GM12878 (cell line): ENCODE measurements at regions of chr12 and their contacts with region 1.

Region 1: GRCh38 chr12:44015335-44015941 is 179.6 kb downstream of the TMEM117 start:
- DNase-seq: peak; percentile 32
- ATAC-seq: peak; percentile 87
- H3K4me3 ChIP-seq: no peak overlapping the region
- H3K27ac ChIP-seq: no peak overlapping the region
- H3K4me1 ChIP-seq: no peaks in the 10 kb centered on the region
- H3K27me3 ChIP-seq: no peaks in the 10 kb centered on the region
- CTCF ChIP-seq: peak; percentile 41 to 75 (median 61); a peak in 5 of 6 replicates
- EP300 ChIP-seq: no peak
- POLR2A ChIP-seq: no peak
- RAD21 ChIP-seq: peak; percentile 87

Region 2: DNA sequence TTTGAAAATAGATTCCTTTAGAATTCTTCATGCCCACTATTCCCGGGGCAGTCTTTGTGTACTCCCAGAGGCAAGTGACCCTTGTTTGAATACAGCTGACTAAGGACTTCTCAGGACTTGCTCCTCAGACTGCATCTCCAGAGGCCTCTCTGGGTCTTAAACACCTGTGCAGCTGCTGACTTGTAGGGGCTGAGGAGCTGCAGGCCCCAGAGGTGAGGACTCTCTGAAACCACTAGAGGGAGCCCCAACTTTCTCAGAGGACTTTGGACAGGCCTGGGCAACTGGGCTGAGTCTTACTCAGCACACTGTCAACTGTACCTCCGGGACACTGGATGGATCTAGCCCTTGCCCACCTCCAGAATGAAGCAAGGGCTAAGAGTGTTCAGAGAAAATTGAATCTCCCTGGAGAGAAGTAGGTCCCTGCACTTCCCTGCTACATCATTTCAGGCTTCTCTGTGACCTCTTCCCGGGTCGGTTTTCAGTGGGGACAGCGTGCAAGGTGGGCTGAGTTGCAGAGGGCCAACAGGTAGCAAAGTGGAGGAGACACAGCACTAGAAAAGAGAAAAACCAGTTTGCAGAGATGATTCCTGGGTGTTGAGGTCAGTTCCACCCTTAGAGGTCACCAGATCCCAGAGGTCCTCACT is 15.0 kb before region 1 on chr12:
- CTCF ChIA-PET with region 1: interaction called, 25 read pairs
- POLR2A ChIA-PET with region 1: no interaction called
- RAD21 ChIA-PET with region 1: interaction called, 6 read pairs
- SMC1A ChIA-PET with region 1: interaction called, 4 read pairs
- in situ Hi-C with region 1: no loop called
- intact Hi-C with region 1: no loop called
- DNase-seq: no peak
- ATAC-seq: peak; percentile 99
- H3K4me3 ChIP-seq: no peak overlapping the region
- H3K27ac ChIP-seq: no peak overlapping the region
- H3K4me1 ChIP-seq: no peaks in the 10 kb centered on the region
- H3K27me3 ChIP-seq: no peaks in the 10 kb centered on the region
- CTCF ChIP-seq: peak; percentile 53 to 72 (median 65)
- EP300 ChIP-seq: no peak
- POLR2A ChIP-seq: no peak
- RAD21 ChIP-seq: peak; percentile 50; the same call in 1 of the 2 replicates

Region 3: GRCh38 chr12:44476683-44477082 is 461.2 kb after region 1 on chr12:
- CTCF ChIA-PET with region 1: interaction called, 10 read pairs
- POLR2A ChIA-PET with region 1: no interaction called
- RAD21 ChIA-PET with region 1: interaction called, 5 read pairs
- SMC1A ChIA-PET with region 1: no interaction called
- in situ Hi-C with region 1: no loop called
- intact Hi-C with region 1: no loop called
- DNase-seq: no peak
- ATAC-seq: no peak
- H3K4me3 ChIP-seq: no peak overlapping the region
- H3K27ac ChIP-seq: no peak overlapping the region
- H3K4me1 ChIP-seq: no peaks in the 10 kb centered on the region
- H3K27me3 ChIP-seq: no peaks in the 10 kb centered on the region
- CTCF ChIP-seq: no peak; a peak in 1 of 6 replicates
- EP300 ChIP-seq: no peak
- POLR2A ChIP-seq: no peak
- RAD21 ChIP-seq: peak; percentile 23; the same call in 1 of the 2 replicates

Region 4: GRCh38 chr12:44765796-44766195 is 750.4 kb after region 1 on chr12:
- CTCF ChIA-PET with region 1: interaction called, 11 read pairs
- POLR2A ChIA-PET with region 1: no interaction called
- RAD21 ChIA-PET with region 1: no interaction called
- SMC1A ChIA-PET with region 1: interaction called, 4 read pairs
- in situ Hi-C with region 1: no loop called
- intact Hi-C with region 1: no loop called
- DNase-seq: no peak
- ATAC-seq: no peak
- H3K4me3 ChIP-seq: no peak overlapping the region
- H3K27ac ChIP-seq: no peak overlapping the region
- H3K4me1 ChIP-seq: no peaks in the 10 kb centered on the region
- H3K27me3 ChIP-seq: no peaks in the 10 kb centered on the region
- CTCF ChIP-seq: no peak
- EP300 ChIP-seq: no peak
- POLR2A ChIP-seq: no peak
- RAD21 ChIP-seq: no peak

Region 5: GRCh38 chr12:44930972-44931600 is 915.6 kb after region 1 on chr12:
- CTCF ChIA-PET with region 1: interaction called, 23 read pairs
- POLR2A ChIA-PET with region 1: interaction called, 3 read pairs
- RAD21 ChIA-PET with region 1: interaction called, 37 read pairs
- SMC1A ChIA-PET with region 1: interaction called, 26 read pairs
- in situ Hi-C with region 1: loop called (anchors 5 kb)
- intact Hi-C with region 1: loop called (anchors 1 kb)
- DNase-seq: no peak
- ATAC-seq: peak; percentile 66
- H3K4me3 ChIP-seq: no peak overlapping the region
- H3K27ac ChIP-seq: no peak overlapping the region
- H3K4me1 ChIP-seq: no peaks in the 10 kb centered on the region
- H3K27me3 ChIP-seq: no peaks in the 10 kb centered on the region
- CTCF ChIP-seq: peak; percentile 4 to 58 (median 38); a peak in 2 of 6 replicates
- EP300 ChIP-seq: no peak
- POLR2A ChIP-seq: no peak
- RAD21 ChIP-seq: peak; percentile 83

Region 6: DNA sequence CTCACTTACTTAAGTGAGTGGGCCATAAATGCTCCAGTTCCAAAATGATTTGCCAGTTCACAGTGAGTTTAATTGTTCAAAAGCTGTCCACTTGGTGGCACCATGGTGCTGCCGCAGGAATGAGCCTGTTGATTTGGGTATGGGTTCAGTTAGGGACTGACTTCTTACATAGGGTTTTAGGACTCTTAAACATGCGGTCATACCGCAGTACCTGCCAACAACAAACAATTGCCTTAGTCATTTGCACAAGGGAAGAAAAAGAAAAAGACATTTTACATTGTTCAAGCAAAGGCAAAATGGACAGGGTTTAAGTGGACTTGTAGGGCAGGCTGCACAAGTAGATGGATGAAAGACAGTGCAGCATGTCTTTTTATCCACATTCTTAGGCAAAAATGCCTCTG is 1115.4 kb after region 1 on chr12:
- CTCF ChIA-PET with region 1: no interaction called
- POLR2A ChIA-PET with region 1: no interaction called
- RAD21 ChIA-PET with region 1: no interaction called
- SMC1A ChIA-PET with region 1: no interaction called
- in situ Hi-C with region 1: no loop called
- intact Hi-C with region 1: no loop called
- DNase-seq: peak; percentile 16
- ATAC-seq: peak; percentile 95
- H3K4me3 ChIP-seq: no peak overlapping the region
- H3K27ac ChIP-seq: no peak overlapping the region
- H3K4me1 ChIP-seq: no peaks in the 10 kb centered on the region
- H3K27me3 ChIP-seq: no peaks in the 10 kb centered on the region
- CTCF ChIP-seq: peak; percentile 69 to 73 (median 69)
- EP300 ChIP-seq: no peak
- POLR2A ChIP-seq: no peak
- RAD21 ChIP-seq: peak; percentile 88